IMR-90 (cell line): ENCODE measurements at regions of chr2 and their contacts with region 1.

Region 1: DNA sequence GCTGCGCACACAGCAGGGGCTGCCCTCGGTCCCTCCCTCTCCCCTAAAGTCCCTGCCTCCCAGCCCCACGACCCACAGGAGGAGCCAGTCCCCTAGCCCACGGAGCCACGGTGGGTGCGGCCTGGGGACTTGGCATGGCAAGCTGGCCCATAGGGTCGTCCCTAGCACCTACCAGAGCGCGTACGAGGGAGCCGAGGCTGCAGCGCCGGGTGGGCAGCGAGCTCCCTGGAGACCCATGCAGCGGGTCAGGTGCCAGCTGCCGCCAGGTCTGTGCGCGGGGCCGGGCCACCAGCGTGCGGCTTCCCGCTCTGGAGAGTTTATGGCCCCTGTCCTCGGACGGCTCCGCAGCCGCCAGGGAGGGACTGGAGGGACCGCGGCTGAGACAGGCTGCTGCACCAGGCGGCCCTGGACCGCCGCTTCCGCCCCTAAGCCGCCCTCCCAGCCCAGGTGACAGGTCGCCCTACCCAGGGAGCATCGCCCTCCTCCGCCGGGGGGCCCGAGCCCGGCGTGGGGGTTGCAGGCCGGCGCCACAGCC is 273.6 kb downstream of the CCDC74A start:
- DNase-seq: no peak
- ATAC-seq: no peak
- H3K4me3 ChIP-seq: no peak overlapping the region
- H3K27ac ChIP-seq: no peak overlapping the region
- H3K4me1 ChIP-seq: no peaks in the 10 kb centered on the region
- H3K27me3 ChIP-seq: no peaks in the 10 kb centered on the region
- CTCF ChIP-seq: no peak
- POLR2A ChIP-seq: no peak
- RAD21 ChIP-seq: no peak

Region 2: DNA sequence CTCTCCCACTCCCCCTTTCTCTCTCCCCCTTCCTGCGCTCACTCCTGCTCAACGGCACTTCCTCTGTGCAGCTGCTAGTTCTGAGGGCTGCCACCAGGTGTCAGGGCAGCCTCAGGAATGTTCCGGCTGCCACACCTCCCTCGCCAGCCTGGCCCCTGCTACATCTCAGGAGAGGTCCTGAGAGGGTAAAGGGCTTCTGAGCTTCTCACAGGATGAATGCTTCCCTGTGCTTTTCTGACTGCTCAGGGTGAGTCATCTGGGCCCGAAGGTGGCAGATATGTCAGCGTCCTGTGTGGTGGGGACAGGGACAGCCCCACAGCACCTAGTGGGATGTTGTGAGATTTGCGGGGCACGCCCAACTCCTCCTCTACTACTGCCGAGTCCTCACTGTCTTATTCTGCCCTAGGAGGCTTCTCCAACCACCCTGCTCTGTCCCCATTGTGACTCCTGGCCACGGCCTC is 647.2 kb before region 1 on chr2:
- CTCF ChIA-PET with region 1: no interaction called
- POLR2A ChIA-PET with region 1: no interaction called
- dilution Hi-C with region 1: no loop called
- in situ Hi-C with region 1: no loop called
- intact Hi-C with region 1: loop called (anchors 5 kb)
- DNase-seq: peak; percentile 54
- ATAC-seq: peak; percentile 98
- H3K4me3 ChIP-seq: no peak overlapping the region
- H3K27ac ChIP-seq: no peak overlapping the region
- H3K4me1 ChIP-seq: no peaks in the 10 kb centered on the region
- H3K27me3 ChIP-seq: no peaks in the 10 kb centered on the region; the same call in 1 of the 2 replicates
- CTCF ChIP-seq: peak; percentile 86
- POLR2A ChIP-seq: no peak
- RAD21 ChIP-seq: peak; percentile 86

Region 3: DNA sequence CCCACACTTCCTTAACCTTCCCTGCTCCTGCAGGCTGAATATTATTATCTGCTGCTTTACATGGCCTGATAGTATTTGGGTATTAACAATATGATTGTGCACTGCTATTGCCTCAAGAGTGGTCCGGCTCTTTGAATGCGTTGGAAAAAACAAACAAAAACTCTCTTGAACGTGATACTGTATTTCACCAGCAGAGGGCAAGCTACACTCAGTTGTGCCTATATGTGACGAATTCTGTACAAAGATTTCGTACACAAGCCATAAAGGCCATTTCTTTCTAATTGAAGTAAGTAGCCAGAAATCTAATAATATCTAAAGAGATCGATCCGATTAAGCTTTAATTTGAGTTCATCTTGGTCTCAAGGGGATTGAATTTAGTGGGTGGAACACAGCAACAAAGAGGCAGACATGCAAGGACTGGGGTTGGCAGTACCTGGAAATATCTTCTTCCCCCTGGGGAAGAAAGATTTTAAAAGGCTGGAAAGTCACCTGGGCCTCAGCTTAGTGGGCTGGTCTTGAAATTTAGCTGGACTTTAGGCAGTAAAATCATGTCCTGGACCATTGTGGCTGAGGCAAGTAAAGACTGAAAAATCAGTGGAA is 388.0 kb before region 1 on chr2:
- CTCF ChIA-PET with region 1: interaction called, 6 read pairs
- POLR2A ChIA-PET with region 1: no interaction called
- dilution Hi-C with region 1: no loop called
- in situ Hi-C with region 1: loop called (anchors 25 kb)
- intact Hi-C with region 1: loop called (anchors 1 kb)
- DNase-seq: peak; percentile 63
- ATAC-seq: peak; percentile 95
- H3K4me3 ChIP-seq: no peak overlapping the region
- H3K27ac ChIP-seq: no peak overlapping the region
- H3K4me1 ChIP-seq: no peaks in the 10 kb centered on the region
- H3K27me3 ChIP-seq: peaks cover 26% of the 10 kb centered on the region
- CTCF ChIP-seq: peak; percentile 80
- POLR2A ChIP-seq: no peak
- RAD21 ChIP-seq: peak; percentile 83

Region 4: GRCh38 chr2:131492418-131493198 is 308.7 kb before region 1 on chr2:
- CTCF ChIA-PET with region 1: no interaction called
- POLR2A ChIA-PET with region 1: no interaction called
- dilution Hi-C with region 1: no loop called
- in situ Hi-C with region 1: no loop called
- intact Hi-C with region 1: loop called (anchors 5 kb)
- DNase-seq: peak; percentile 90
- ATAC-seq: peak; percentile 82
- H3K4me3 ChIP-seq: peak overlapping the region; percentile 76
- H3K27ac ChIP-seq: peak overlapping the region; percentile 74
- H3K4me1 ChIP-seq: 0 out of 2 replicates have a peak, but pooled peaks cover 2% of the 10 kb centered on the region
- H3K27me3 ChIP-seq: no peaks in the 10 kb centered on the region
- CTCF ChIP-seq: peak; percentile 66
- POLR2A ChIP-seq: no peak
- RAD21 ChIP-seq: no peak

Region 5: DNA sequence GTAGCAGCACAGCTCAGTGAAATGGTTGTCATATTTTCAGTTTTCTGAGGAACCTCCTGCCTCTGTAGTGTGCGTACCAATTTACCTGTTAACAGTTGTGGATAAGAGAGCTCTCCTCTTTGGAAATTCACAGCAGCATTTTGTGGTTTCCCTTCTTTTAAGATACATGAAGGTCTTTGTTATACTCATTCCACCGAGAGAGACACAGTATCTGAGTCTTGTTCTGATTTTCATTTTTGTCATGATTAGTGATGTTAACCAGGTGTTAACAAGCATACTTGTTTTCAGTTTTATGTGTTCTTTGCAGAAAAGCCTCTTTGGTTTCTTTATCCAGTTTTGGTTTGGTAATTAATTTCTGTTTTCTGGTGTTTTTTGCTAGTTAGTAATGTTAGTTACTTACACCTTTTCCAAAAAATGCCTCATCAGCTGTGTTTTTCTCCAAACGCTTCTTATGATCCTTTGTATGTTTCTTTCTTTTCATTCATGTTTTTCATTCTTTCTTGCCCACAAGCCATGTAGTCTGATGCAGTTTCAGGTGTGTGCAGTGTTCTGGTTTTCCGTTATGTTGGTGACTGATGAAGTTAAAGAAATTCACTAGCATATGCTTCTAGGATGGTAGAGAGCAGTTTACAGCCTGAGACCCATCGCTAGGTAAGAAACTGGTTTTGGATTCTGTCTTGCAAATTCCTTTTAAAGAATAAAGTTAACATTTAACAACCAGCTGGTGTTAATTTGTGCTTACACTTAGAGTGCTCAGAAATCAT is 243.5 kb before region 1 on chr2:
- CTCF ChIA-PET with region 1: no interaction called
- POLR2A ChIA-PET with region 1: no interaction called
- dilution Hi-C with region 1: no loop called
- in situ Hi-C with region 1: no loop called
- intact Hi-C with region 1: no loop called
- DNase-seq: no peak
- ATAC-seq: no peak
- H3K4me3 ChIP-seq: no peak overlapping the region
- H3K27ac ChIP-seq: no peak overlapping the region
- H3K4me1 ChIP-seq: no peaks in the 10 kb centered on the region
- H3K27me3 ChIP-seq: peaks cover 5% of the 10 kb centered on the region
- CTCF ChIP-seq: no peak
- POLR2A ChIP-seq: no peak
- RAD21 ChIP-seq: no peak

Region 6: DNA sequence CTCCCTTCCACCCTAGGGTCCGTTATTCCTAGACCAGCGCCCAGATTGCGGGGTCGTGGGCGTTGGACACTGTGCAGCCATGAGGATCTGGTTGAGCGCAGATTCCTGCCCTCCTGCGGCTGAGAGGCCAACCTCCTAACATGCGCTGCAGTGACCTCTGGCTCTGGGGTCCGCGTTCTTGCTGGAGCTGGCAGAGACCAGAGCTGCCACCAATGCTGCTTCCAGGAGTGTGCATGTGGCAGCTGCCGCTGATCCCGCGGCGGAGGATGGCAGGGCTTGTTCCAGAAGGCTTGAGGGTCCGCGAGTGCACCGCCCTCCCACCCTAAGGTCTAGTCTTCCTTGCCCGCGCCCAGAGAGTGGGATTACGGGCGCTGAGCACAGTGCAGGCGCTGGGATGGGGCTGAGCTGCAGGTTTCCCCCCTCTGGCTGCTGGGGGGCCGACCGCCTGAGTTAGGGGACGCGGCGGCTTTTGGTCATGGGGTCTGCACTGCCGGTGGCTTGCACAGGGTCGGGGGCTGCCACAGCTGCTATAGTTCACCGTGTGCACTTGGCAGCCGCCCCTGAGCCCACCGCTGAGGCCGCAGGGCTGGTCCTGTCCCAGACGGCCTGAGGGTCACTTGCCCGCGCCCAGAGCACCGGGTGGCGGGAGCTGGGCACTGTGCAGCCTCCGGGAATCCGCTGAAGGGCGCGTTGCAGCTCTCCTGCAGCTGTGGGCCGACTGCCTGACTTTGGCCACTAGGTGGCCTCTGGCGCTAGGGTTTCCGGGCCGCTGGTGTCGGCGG is 127.7 kb before region 1 on chr2:
- CTCF ChIA-PET with region 1: interaction called, 6 read pairs
- POLR2A ChIA-PET with region 1: no interaction called
- dilution Hi-C with region 1: no loop called
- in situ Hi-C with region 1: loop called (anchors 25 kb)
- intact Hi-C with region 1: loop called (anchors 1 kb)
- DNase-seq: peak; percentile 44
- ATAC-seq: peak; percentile 93
- H3K4me3 ChIP-seq: no peak overlapping the region; the same call in 1 of the 2 replicates
- H3K27ac ChIP-seq: no peak overlapping the region
- H3K4me1 ChIP-seq: peaks cover 11% of the 10 kb centered on the region
- H3K27me3 ChIP-seq: no peaks in the 10 kb centered on the region; the same call in 1 of the 2 replicates
- CTCF ChIP-seq: peak; percentile 81
- POLR2A ChIP-seq: no peak
- RAD21 ChIP-seq: peak; percentile 81

Region 7: GRCh38 chr2:131682122-131682944 is 118.9 kb before region 1 on chr2:
- CTCF ChIA-PET with region 1: interaction called, 4 read pairs
- POLR2A ChIA-PET with region 1: no interaction called
- dilution Hi-C with region 1: no loop called
- in situ Hi-C with region 1: loop called (anchors 25 kb)
- intact Hi-C with region 1: no loop called
- DNase-seq: peak; percentile 84
- ATAC-seq: peak; percentile 88
- H3K4me3 ChIP-seq: peak overlapping the region; percentile 75
- H3K27ac ChIP-seq: peak overlapping the region; percentile 58
- H3K4me1 ChIP-seq: peaks cover 5% of the 10 kb centered on the region; the same call in 1 of the 2 replicates
- H3K27me3 ChIP-seq: no peaks in the 10 kb centered on the region
- CTCF ChIP-seq: peak; percentile 23
- POLR2A ChIP-seq: peak; percentile 82
- RAD21 ChIP-seq: peak; percentile 10; the same call in 1 of the 2 replicates